Lower lobe of right lung (tissue), 2 donors: ENCODE measurements at regions of chr1 and their contacts with region 1.

Region 1: GRCh38 chr1:201042779-201043461 is 19.4 kb upstream of the KIF21B start:
- DNase-seq: peak; percentile 69
- ATAC-seq: peak; percentile 79 to 86
- H3K4me3 ChIP-seq: no peak overlapping the region
- H3K27ac ChIP-seq: no peak overlapping the region
- H3K4me1 ChIP-seq: no peaks in the 10 kb centered on the region
- H3K27me3 ChIP-seq: no peaks in the 10 kb centered on the region
- CTCF ChIP-seq: peak; percentile 84

Region 2: GRCh38 chr1:200971955-200972711 is 70.8 kb before region 1 on chr1:
- intact Hi-C with region 1: loop called (anchors 5 kb)
- DNase-seq: peak; percentile 65
- ATAC-seq: peak; percentile 48
- H3K4me3 ChIP-seq: peak overlapping the region; percentile 2
- H3K27ac ChIP-seq: no peak overlapping the region
- H3K4me1 ChIP-seq: peaks cover 7% of the 10 kb centered on the region
- H3K27me3 ChIP-seq: no peaks in the 10 kb centered on the region
- CTCF ChIP-seq: peak; percentile 95

Region 3: DNA sequence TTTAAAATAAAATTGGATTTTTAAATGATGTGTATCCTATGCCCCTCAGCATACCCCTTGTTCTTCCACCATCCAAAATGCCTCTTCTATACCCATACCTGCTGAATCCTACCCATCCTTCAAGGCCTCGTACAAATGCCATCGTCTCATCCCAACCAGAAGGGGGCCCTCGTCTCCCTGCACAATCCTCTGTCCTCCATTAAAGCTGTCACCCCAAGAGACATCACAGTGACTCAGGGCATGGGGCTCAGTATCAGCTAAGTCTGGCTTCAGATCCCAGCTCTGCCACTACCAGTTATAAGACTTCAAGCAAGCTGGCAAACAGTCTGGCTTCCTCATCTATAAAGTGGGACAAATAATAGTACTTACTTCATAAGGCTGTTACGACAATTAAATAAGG is 171.5 kb after region 1 on chr1:
- intact Hi-C with region 1: no loop called
- DNase-seq: no peak
- ATAC-seq: no peak
- H3K4me3 ChIP-seq: no peak overlapping the region
- H3K27ac ChIP-seq: no peak overlapping the region
- H3K4me1 ChIP-seq: no peaks in the 10 kb centered on the region
- H3K27me3 ChIP-seq: no peaks in the 10 kb centered on the region
- CTCF ChIP-seq: no peak